Dorsolateral prefrontal cortex (tissue), 120 donors: ENCODE measurements at regions of chr1 and their contacts with region 1.

Region 1: DNA sequence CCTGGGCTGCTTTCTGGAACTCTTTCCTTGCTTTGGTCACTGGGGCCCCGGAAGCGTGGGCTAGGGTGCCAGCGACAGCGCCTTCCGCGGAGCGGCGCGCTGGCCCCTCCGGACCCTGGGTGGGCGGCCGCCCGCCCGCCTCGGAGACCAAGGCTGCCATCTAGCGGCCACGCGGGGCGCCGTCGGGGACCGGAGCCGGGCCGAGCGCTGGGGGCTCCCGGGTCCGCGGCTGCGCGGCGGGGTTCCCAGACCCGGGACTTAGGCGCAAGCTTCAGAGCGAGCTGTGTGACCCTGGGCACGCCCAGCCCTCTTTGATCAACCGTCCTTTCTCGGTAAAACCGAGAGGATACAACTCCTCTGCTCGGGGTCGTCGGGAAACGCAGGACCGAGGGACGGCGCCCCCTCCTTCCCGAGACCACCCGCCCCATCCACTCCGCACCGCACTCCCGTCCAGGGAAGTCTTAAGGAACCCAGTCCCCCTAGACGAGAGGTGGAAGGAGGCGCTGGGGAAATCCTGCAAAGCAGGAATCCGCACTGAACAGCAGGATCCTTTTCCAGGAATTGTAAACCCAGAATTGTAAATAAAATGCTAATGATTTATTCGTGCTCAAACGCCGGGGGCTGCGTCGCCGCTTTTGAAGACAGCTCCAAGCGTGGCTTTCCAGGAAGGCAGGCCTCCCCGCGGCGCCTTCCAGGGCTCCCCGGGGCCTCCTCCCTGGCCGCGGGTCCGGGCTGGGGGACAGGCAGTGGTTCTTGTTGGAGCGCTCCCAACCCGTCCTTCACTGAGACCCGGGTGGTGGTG is 41.2 kb downstream of the RRAGC start:
- DNase-seq: peak in 1 of 10 donors; percentile 53
- H3K4me3 ChIP-seq: peak overlapping the region in 58 of 59 donors; percentile 8 to 61 (median 42)
- H3K27ac ChIP-seq: no peak overlapping the region
- H3K27me3 ChIP-seq: peaks cover 0 to 42% (median 14%) of the 10 kb centered on the region in 45 donors
- CTCF ChIP-seq: peak; percentile 43 to 95 (median 78)

Region 2: GRCh38 chr1:38608202-38608864 is 210.0 kb before region 1 on chr1:
- intact Hi-C with region 1: loop called in 1 of 2 experiments (anchors 10 kb)
- DNase-seq: no peak
- H3K4me3 ChIP-seq: no peak overlapping the region
- H3K27ac ChIP-seq: no peak overlapping the region
- H3K27me3 ChIP-seq: peaks cover 0 to 9% (median 0%) of the 10 kb centered on the region in 45 donors
- CTCF ChIP-seq: peak in 43 of 56 donors; percentile 13 to 70 (median 39)

Region 3: GRCh38 chr1:38671221-38671620 is 147.2 kb before region 1 on chr1:
- intact Hi-C with region 1: no loop called
- DNase-seq: peak in 1 of 10 donors; percentile 14
- H3K4me3 ChIP-seq: no peak overlapping the region
- H3K27ac ChIP-seq: peak overlapping the region in 6 of 59 donors; percentile 26 to 51 (median 34)
- H3K27me3 ChIP-seq: peaks cover 0 to 12% (median 0%) of the 10 kb centered on the region in 45 donors
- CTCF ChIP-seq: no peak

Region 4: GRCh38 chr1:38804062-38804886 is 14.1 kb before region 1 on chr1:
- intact Hi-C with region 1: no loop called
- DNase-seq: no peak
- H3K4me3 ChIP-seq: peak overlapping the region in 57 of 59 donors; percentile 10 to 67 (median 46)
- H3K27ac ChIP-seq: no peak overlapping the region
- H3K27me3 ChIP-seq: peaks cover 0 to 41% (median 10%) of the 10 kb centered on the region in 45 donors
- CTCF ChIP-seq: no peak